AG04449 (cell line): ENCODE measurements at regions of chr11 and their contacts with region 1.

Region 1: DNA sequence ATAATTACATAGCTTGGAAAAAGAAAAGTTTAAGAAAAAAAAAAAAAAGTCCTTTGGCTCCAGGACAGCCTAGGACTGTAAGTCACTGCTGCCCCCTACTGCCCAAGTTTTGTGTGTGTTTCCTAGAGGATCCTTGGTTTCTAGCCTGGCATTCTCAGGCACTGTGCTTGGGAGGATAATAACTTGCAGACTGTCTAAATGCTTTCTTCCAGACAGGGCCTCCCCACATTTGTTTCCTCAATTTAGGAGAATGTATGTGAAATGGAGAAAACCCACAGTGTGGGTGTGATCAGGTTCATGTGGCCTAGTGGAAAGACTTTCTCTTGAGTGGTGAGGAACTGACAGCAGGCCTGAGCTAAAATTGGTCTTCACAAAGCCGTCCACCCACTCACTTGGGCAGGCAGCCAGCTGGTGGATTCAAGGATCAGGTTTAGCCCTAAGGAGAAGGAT is 191.0 kb downstream of the NAV2 start:
- DNase-seq: no peak
- H3K4me3 ChIP-seq: no peak overlapping the region
- CTCF ChIP-seq: peak; percentile 79

Region 2: DNA sequence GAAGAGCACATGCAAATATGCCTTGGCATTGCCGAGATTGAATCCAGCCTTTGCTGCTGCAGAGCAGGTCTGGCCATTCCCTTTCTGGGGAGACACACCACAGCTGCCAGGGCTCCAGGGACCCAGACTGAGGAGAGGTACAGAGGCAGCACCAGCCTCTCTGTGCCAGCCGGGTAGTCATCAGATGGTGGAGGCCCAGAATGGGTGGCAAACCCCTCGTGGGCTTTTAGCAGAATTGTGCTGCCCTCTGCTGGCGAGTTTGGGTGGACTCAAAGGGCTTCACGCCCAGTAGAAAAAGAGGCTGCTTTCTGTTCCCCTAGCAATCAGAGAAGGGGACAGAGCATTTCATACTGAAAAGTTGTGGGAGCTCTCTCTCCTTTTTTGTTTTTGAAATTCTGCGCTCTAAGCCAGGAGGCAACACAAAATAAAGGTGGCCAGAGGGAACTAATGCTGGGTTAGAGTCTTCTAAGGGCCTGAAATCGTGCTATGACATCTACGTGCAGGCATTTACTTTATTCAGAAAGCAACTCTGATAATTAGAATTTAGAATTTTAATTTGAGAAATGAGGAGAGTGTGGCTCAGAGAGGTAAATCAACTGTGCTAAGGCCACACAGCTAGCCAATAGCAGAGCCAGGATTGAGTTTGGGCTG is 349.8 kb before region 1 on chr11:
- CTCF ChIA-PET with region 1: interaction called, 404 read pairs
- POLR2A ChIA-PET with region 1: no interaction called
- DNase-seq: no peak
- H3K4me3 ChIP-seq: no peak overlapping the region
- CTCF ChIP-seq: peak; percentile 74

Region 3: DNA sequence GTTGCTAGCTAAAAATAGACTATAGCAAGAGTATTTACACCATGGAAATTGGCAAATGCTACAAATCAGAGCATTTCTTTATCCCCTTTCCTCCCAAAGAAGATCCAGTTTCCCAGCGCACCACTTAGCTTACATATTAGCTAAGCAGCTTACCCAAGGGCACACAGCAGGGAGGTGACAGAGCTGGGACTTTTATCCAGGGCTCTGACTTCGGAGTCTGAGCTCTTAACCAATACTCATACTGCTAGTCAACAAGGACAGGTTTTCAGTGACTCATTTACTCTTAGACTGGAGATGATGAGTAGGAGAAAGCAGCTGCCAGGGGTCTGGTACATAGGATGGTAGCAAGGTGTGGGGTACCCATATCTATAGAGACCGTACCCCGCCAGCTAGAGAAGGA is 152.6 kb before region 1 on chr11:
- CTCF ChIA-PET with region 1: interaction called, 15 read pairs
- POLR2A ChIA-PET with region 1: no interaction called
- DNase-seq: no peak
- H3K4me3 ChIP-seq: no peak overlapping the region
- CTCF ChIP-seq: no peak

Region 4: GRCh38 chr11:19879307-19880087 is 24.1 kb before region 1 on chr11:
- CTCF ChIA-PET with region 1: interaction called, 15 read pairs
- POLR2A ChIA-PET with region 1: no interaction called
- DNase-seq: no peak
- H3K4me3 ChIP-seq: no peak overlapping the region
- CTCF ChIP-seq: no peak

Region 5: DNA sequence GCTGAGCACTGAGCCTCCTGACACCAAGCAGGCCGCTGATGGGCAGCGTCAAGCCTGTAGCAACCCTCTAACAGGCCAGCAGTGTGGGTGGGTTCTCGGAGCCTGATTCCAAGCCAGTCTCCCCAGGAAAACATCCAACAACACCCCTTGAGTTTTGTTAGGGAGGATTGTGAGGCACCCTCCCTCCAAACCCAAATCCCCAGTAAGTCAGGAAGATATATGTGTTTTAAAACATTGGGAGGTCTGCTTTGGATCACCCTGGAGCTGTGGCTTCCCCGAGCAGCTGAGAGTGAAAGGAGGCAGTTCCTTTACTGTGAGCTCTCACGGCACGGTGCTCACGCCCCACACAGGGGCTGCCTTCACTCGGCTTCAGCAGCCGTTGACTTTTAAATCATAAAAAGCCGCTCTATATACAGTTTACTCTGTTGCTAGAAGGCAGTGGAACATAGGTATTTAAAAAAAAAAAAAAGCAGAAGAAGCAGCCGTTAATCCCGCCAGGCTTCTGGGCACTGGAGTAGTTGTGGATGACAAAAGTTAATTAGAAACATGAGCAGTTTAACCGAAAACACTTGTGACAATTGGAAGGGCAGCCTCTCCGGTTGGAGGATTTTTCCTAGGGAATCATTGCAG is 27.6 kb after region 1 on chr11:
- CTCF ChIA-PET with region 1: interaction called, 42 read pairs
- POLR2A ChIA-PET with region 1: no interaction called
- DNase-seq: no peak
- H3K4me3 ChIP-seq: peak overlapping the region; percentile 54
- CTCF ChIP-seq: no peak

Region 6: GRCh38 chr11:20110908-20111669 is 207.4 kb after region 1 on chr11:
- CTCF ChIA-PET with region 1: interaction called, 33 read pairs
- POLR2A ChIA-PET with region 1: no interaction called
- DNase-seq: peak; percentile 83
- H3K4me3 ChIP-seq: no peak overlapping the region
- CTCF ChIP-seq: peak; percentile 85